HAP-1 (cell line): ENCODE measurements at regions of chr7 and their contacts with region 1.

Region 1: GRCh38 chr7:23055582-23056178 is 41.8 kb upstream of the HYCC1 start:
- DNase-seq: peak; percentile 76 to 78
- H3K4me3 ChIP-seq: no peak overlapping the region
- H3K4me1 ChIP-seq: no peaks in the 10 kb centered on the region; the same call in 1 of the 2 replicates
- H3K27me3 ChIP-seq: no peaks in the 10 kb centered on the region

Region 2: GRCh38 chr7:22726345-22727185 is 329.1 kb before region 1 on chr7:
- in situ Hi-C with region 1: loop called (anchors 25 kb)
- DNase-seq: peak; percentile 77 to 82
- H3K4me3 ChIP-seq: no peak overlapping the region
- H3K4me1 ChIP-seq: peaks cover 8% of the 10 kb centered on the region
- H3K27me3 ChIP-seq: no peaks in the 10 kb centered on the region